GM12878 (cell line): ENCODE measurements at regions of chr6 and their contacts with region 1.

Region 1: GRCh38 chr6:64280569-64280968 is 645.0 kb downstream of the PHF3 start:
- DNase-seq: no peak
- ATAC-seq: peak; percentile 68
- H3K4me3 ChIP-seq: no peak overlapping the region
- H3K27ac ChIP-seq: no peak overlapping the region
- H3K4me1 ChIP-seq: no peaks in the 10 kb centered on the region
- H3K27me3 ChIP-seq: no peaks in the 10 kb centered on the region
- CTCF ChIP-seq: peak; percentile 32 to 67 (median 41); a peak in 4 of 6 replicates
- EP300 ChIP-seq: no peak
- POLR2A ChIP-seq: no peak
- RAD21 ChIP-seq: peak; percentile 87

Region 2: GRCh38 chr6:64012351-64013001 is 268.1 kb before region 1 on chr6:
- CTCF ChIA-PET with region 1: interaction called, 18 read pairs
- POLR2A ChIA-PET with region 1: no interaction called
- RAD21 ChIA-PET with region 1: interaction called, 5 read pairs
- SMC1A ChIA-PET with region 1: interaction called, 3 read pairs
- in situ Hi-C with region 1: no loop called
- intact Hi-C with region 1: no loop called
- DNase-seq: no peak
- ATAC-seq: peak; percentile 92
- H3K4me3 ChIP-seq: no peak overlapping the region
- H3K27ac ChIP-seq: no peak overlapping the region
- H3K4me1 ChIP-seq: no peaks in the 10 kb centered on the region
- H3K27me3 ChIP-seq: no peaks in the 10 kb centered on the region
- CTCF ChIP-seq: peak; percentile 45 to 85 (median 72); a peak in 4 of 6 replicates
- EP300 ChIP-seq: no peak
- POLR2A ChIP-seq: no peak
- RAD21 ChIP-seq: peak; percentile 93

Region 3: GRCh38 chr6:64084185-64084663 is 196.3 kb before region 1 on chr6:
- CTCF ChIA-PET with region 1: no interaction called
- POLR2A ChIA-PET with region 1: no interaction called
- RAD21 ChIA-PET with region 1: no interaction called
- SMC1A ChIA-PET with region 1: no interaction called
- in situ Hi-C with region 1: no loop called
- intact Hi-C with region 1: no loop called
- DNase-seq: no peak
- ATAC-seq: no peak
- H3K4me3 ChIP-seq: no peak overlapping the region
- H3K27ac ChIP-seq: no peak overlapping the region
- H3K4me1 ChIP-seq: no peaks in the 10 kb centered on the region
- H3K27me3 ChIP-seq: no peaks in the 10 kb centered on the region
- CTCF ChIP-seq: no peak
- EP300 ChIP-seq: no peak
- POLR2A ChIP-seq: no peak
- RAD21 ChIP-seq: no peak

Region 4: DNA sequence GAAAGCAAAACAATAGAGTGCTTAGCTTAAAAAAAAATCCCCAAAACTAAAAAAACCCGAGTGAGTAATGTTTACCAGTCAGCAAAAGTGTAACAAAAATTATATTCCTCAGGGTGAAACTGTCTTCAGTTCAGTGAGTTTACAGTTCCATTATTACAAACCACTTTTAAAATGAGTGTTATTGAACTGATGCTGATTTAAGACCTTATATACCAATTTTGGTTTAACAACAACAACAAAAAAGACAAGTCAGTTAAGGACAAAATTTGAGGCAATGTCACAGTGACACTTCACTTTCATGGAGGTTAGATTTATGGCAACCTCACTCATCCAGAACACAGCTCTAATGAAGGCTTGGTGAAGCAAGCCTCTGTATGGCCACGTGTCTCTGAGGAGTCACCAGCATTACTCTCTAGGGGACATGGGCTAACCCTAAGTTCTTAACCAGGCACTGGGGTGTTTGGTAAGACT is 14.2 kb before region 1 on chr6:
- CTCF ChIA-PET with region 1: interaction called, 10 read pairs
- POLR2A ChIA-PET with region 1: no interaction called
- RAD21 ChIA-PET with region 1: interaction called, 3 read pairs
- SMC1A ChIA-PET with region 1: interaction called, 5 read pairs
- in situ Hi-C with region 1: no loop called
- intact Hi-C with region 1: no loop called
- DNase-seq: peak; percentile 79
- ATAC-seq: peak; percentile 96
- H3K4me3 ChIP-seq: no peak overlapping the region
- H3K27ac ChIP-seq: peak overlapping the region; percentile 50; the same call in 1 of the 2 replicates
- H3K4me1 ChIP-seq: peaks cover 18% of the 10 kb centered on the region
- H3K27me3 ChIP-seq: no peaks in the 10 kb centered on the region
- CTCF ChIP-seq: no peak
- EP300 ChIP-seq: peak; percentile 83 to 88; a peak in 3 of 4 replicates
- POLR2A ChIP-seq: no peak
- RAD21 ChIP-seq: no peak

Region 5: GRCh38 chr6:64330694-64331307 is 50.2 kb after region 1 on chr6:
- CTCF ChIA-PET with region 1: interaction called, 84 read pairs
- POLR2A ChIA-PET with region 1: no interaction called
- RAD21 ChIA-PET with region 1: interaction called, 63 read pairs
- SMC1A ChIA-PET with region 1: interaction called, 66 read pairs
- in situ Hi-C with region 1: no loop called
- intact Hi-C with region 1: loop called (anchors 1 kb)
- DNase-seq: peak; percentile 11
- ATAC-seq: peak; percentile 88
- H3K4me3 ChIP-seq: no peak overlapping the region
- H3K27ac ChIP-seq: no peak overlapping the region
- H3K4me1 ChIP-seq: no peaks in the 10 kb centered on the region
- H3K27me3 ChIP-seq: no peaks in the 10 kb centered on the region
- CTCF ChIP-seq: peak; percentile 68 to 79 (median 71)
- EP300 ChIP-seq: no peak
- POLR2A ChIP-seq: no peak
- RAD21 ChIP-seq: peak; percentile 82

Region 6: GRCh38 chr6:64505312-64505711 is 224.7 kb after region 1 on chr6:
- CTCF ChIA-PET with region 1: interaction called, 4 read pairs
- POLR2A ChIA-PET with region 1: no interaction called
- RAD21 ChIA-PET with region 1: no interaction called
- SMC1A ChIA-PET with region 1: no interaction called
- in situ Hi-C with region 1: no loop called
- intact Hi-C with region 1: loop called (anchors 1 kb)
- DNase-seq: no peak
- ATAC-seq: peak; percentile 85
- H3K4me3 ChIP-seq: no peak overlapping the region
- H3K27ac ChIP-seq: no peak overlapping the region
- H3K4me1 ChIP-seq: no peaks in the 10 kb centered on the region
- H3K27me3 ChIP-seq: no peaks in the 10 kb centered on the region
- CTCF ChIP-seq: peak; percentile 50 to 78 (median 55)
- EP300 ChIP-seq: no peak
- POLR2A ChIP-seq: no peak
- RAD21 ChIP-seq: peak; percentile 43